ENCODE measurements at regions of chr6 and their contacts with region 1.

Region 1: DNA sequence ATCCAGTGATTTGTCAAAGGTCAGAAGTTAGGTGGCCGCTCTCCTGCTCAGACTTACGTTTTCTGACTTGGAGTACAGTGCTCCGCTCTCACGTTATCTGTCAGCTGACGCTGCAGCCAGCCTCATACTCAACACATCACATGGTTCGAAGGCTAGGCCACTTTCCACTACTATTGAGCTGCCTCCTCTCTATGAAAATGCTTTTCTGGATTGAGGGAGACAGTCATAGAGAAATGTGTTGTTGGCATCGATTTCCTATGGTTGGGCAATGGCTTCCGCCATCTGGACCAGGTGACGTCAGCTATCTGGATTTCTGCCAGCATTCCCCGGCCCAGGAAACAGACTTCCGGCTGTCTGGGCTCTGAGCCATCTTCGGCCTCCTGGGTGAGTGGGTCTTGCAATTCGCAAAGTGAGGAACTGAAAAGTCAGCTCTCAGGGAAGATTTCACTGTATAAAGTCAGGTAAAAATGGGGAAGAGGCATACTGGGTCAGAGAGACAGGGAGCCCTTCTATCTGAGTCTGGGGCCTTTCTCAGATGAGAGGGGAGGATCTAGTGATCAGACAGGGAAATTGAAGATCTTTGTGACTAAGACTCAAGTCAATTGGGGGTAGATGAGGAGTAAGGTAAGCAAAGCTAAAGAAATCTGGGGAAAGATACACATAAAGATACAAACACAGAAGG is 37.5 kb upstream of the IER3 start:
- DNase-seq: peak; percentile 88
- H3K27ac ChIP-seq: peak overlapping the region; percentile 99
- CTCF ChIP-seq: no peak

Region 2: DNA sequence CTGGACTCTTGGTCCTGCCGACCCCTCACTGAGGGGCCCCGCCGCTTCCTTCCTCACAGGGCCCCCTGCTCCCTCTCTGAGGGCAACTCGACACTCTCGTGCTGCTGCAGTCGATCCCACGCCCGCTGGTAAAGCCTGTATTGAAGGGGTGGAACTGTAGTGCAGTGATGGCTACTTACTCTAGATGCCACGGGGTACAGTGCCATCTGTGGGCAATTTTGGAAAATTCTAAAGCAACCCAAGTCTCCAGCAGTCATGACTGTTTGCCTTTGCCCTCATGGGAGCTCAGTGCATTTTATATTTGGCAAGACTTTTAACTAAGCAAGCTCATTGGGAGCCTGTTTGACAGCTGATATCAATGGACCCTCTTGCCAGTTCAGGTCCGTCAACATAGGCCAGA is 141.4 kb before region 1 on chr6:
- CTCF ChIA-PET with region 1: no interaction called
- POLR2A ChIA-PET with region 1: no interaction called
- DNase-seq: no peak
- H3K27ac ChIP-seq: no peak overlapping the region
- CTCF ChIP-seq: no peak

Region 3: GRCh38 chr6:30744054-30744805 is 37.7 kb before region 1 on chr6 and contains the start of gene IER3:
- CTCF ChIA-PET with region 1: interaction called, 5 read pairs
- POLR2A ChIA-PET with region 1: interaction called, 11 read pairs
- DNase-seq: peak; percentile 84
- H3K27ac ChIP-seq: peak within 1 kb of the TSS; percentile 94
- CTCF ChIP-seq: peak; percentile 43

Region 4: GRCh38 chr6:30752157-30752927 is 29.5 kb before region 1 on chr6:
- CTCF ChIA-PET with region 1: interaction called, 5 read pairs
- POLR2A ChIA-PET with region 1: interaction called, 10 read pairs
- DNase-seq: peak; percentile 93
- H3K27ac ChIP-seq: peak overlapping the region; percentile 98
- CTCF ChIP-seq: no peak

Region 5: GRCh38 chr6:30883685-30884520 is 102.0 kb after region 1 on chr6 and contains the start of gene DDR1:
- CTCF ChIA-PET with region 1: no interaction called
- POLR2A ChIA-PET with region 1: no interaction called
- DNase-seq: peak; percentile 90
- H3K27ac ChIP-seq: peak within 1 kb of the TSS; percentile 99
- CTCF ChIP-seq: no peak

Region 6: GRCh38 chr6:31079656-31080261 is 297.9 kb after region 1 on chr6:
- CTCF ChIA-PET with region 1: no interaction called
- POLR2A ChIA-PET with region 1: no interaction called
- DNase-seq: peak; percentile 58
- H3K27ac ChIP-seq: peak overlapping the region; percentile 33; the same call in 1 of the 2 replicates
- CTCF ChIP-seq: peak; percentile 94